ENCODE measurements at regions of chr15 and their contacts with region 1.

Region 1: GRCh38 chr15:33700695-33701304 is 267.5 kb upstream of the CHRM5 start:
- DNase-seq: peak; percentile 53
- H3K4me3 ChIP-seq: no peak overlapping the region
- H3K27ac ChIP-seq: no peak overlapping the region
- H3K4me1 ChIP-seq: no peaks in the 10 kb centered on the region
- H3K27me3 ChIP-seq: no peaks in the 10 kb centered on the region
- CTCF ChIP-seq: peak; percentile 72 to 87 (median 83)
- EP300 ChIP-seq: no peak
- POLR2A ChIP-seq: no peak

Region 2: GRCh38 chr15:33292717-33293307 is 408.0 kb before region 1 on chr15:
- in situ Hi-C with region 1: loop called in 3 of 4 experiments (anchors 10 to 25 kb)
- intact Hi-C with region 1: no loop called
- DNase-seq: peak; percentile 28
- H3K4me3 ChIP-seq: no peak overlapping the region
- H3K27ac ChIP-seq: no peak overlapping the region
- H3K4me1 ChIP-seq: peaks cover 0 to 3% (median 0%) of the 10 kb centered on the region in 4 donors
- H3K27me3 ChIP-seq: peaks cover 13% of the 10 kb centered on the region
- CTCF ChIP-seq: peak; percentile 37 to 59 (median 52)
- EP300 ChIP-seq: no peak
- POLR2A ChIP-seq: no peak

Region 3: DNA sequence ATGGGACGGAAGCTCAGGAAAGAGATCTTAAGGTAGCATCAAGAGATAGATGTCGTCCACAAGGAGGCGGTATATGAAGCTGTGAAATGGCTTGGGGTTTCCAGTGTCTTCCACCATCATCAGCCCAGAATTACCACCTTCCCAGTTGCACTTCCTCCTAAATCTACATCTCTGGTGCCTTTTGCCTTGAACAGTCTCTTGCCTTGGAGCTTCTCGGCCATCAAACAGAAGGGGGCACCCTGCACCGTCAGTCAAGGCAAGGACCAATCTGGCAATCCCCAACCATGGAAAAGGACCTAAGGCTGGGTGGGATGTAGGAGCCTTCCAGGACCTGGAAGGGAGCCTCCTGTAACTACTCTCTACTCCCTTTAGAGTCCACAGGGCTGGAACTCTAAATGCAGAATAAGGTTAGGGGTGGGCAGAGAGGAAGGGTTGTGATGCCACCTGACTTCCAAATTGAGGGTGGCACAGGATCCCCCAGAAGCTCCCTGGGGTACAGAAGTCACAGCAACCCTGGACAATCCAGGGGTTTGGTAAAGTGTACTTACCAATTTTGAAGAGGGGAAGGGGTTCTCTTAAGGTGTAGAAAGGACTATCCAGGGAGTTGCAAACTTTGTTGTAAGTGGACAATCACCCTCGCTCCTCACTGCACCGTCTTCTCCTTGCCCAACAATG is 391.1 kb before region 1 on chr15:
- in situ Hi-C with region 1: loop called in 1 of 4 experiments (anchors 10 kb)
- intact Hi-C with region 1: no loop called
- DNase-seq: no peak
- H3K4me3 ChIP-seq: no peak overlapping the region
- H3K27ac ChIP-seq: no peak overlapping the region
- H3K4me1 ChIP-seq: no peaks in the 10 kb centered on the region
- H3K27me3 ChIP-seq: peaks cover 45% of the 10 kb centered on the region
- CTCF ChIP-seq: peak in 2 of 5 experiments; percentile 7 to 10
- EP300 ChIP-seq: no peak
- POLR2A ChIP-seq: no peak

Measured in transverse colon (tissue), 4 donors.